ENCODE measurements at regions of chr12 and their contacts with region 1.

Region 1: GRCh38 chr12:31728917-31729640 is at the start of gene AMN1:
- DNase-seq: peak; percentile 100
- H3K4me3 Mint-ChIP-seq: peak within 1 kb of the TSS; percentile 95
- H3K27ac Mint-ChIP-seq: peak within 1 kb of the TSS; percentile 99
- H3K4me1 Mint-ChIP-seq: peaks cover 44% of the 10 kb centered on the region
- H3K27me3 Mint-ChIP-seq: no peaks in the 10 kb centered on the region
- total RNA-seq, gene AMN1: 2.3 and 2.4 TPM in 2 replicates

Region 2: GRCh38 chr12:31659087-31659933 is 69.8 kb before region 1 on chr12 and contains the start of gene ETFBKMT:
- intact Hi-C with region 1: loop called (anchors 1 kb)
- DNase-seq: peak; percentile 98
- H3K4me3 Mint-ChIP-seq: peak within 1 kb of the TSS; percentile 93
- H3K27ac Mint-ChIP-seq: peak within 1 kb of the TSS; percentile 99
- H3K4me1 Mint-ChIP-seq: peaks cover 15% of the 10 kb centered on the region
- H3K27me3 Mint-ChIP-seq: no peaks in the 10 kb centered on the region
- total RNA-seq, gene ETFBKMT: 0.52 and 0.84 TPM in 2 replicates

Region 3: DNA sequence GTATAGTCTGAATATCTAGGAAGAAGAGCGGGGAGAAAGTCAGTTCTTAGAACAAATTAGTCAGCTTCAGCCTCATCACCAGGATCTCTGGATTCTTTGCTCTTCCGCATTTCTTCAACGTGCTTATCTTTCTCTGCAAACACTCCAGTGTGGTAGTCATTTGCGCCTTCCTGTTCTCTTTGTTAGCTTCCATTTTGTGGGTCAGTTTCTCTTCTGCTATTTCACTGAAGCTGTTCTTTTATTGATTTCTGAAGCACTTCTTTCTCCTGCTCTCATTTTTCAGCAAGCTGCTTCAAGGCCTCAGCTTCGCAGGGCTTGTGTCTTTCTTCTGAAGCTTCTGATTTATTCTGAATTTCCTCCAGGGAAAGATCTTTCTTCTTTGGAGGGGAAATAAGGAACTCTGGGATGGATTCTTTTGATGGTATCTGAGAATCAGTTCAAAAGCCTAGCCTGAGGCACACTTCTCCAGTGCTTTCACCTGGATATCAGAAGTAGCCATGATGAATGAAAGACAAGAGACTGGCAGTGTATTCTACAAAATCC is 13.7 kb before region 1 on chr12:
- intact Hi-C with region 1: no loop called
- DNase-seq: no peak
- H3K4me3 Mint-ChIP-seq: no peak overlapping the region
- H3K27ac Mint-ChIP-seq: peak overlapping the region; percentile 9
- H3K4me1 Mint-ChIP-seq: peaks cover 10% of the 10 kb centered on the region
- H3K27me3 Mint-ChIP-seq: no peaks in the 10 kb centered on the region

Region 4: GRCh38 chr12:31749024-31749704 is 20.1 kb after region 1 on chr12:
- intact Hi-C with region 1: loop called (anchors 1 kb)
- DNase-seq: peak; percentile 89
- H3K4me3 Mint-ChIP-seq: peak overlapping the region; percentile 1
- H3K27ac Mint-ChIP-seq: peak overlapping the region; percentile 38
- H3K4me1 Mint-ChIP-seq: peaks cover 43% of the 10 kb centered on the region
- H3K27me3 Mint-ChIP-seq: no peaks in the 10 kb centered on the region

Region 5: DNA sequence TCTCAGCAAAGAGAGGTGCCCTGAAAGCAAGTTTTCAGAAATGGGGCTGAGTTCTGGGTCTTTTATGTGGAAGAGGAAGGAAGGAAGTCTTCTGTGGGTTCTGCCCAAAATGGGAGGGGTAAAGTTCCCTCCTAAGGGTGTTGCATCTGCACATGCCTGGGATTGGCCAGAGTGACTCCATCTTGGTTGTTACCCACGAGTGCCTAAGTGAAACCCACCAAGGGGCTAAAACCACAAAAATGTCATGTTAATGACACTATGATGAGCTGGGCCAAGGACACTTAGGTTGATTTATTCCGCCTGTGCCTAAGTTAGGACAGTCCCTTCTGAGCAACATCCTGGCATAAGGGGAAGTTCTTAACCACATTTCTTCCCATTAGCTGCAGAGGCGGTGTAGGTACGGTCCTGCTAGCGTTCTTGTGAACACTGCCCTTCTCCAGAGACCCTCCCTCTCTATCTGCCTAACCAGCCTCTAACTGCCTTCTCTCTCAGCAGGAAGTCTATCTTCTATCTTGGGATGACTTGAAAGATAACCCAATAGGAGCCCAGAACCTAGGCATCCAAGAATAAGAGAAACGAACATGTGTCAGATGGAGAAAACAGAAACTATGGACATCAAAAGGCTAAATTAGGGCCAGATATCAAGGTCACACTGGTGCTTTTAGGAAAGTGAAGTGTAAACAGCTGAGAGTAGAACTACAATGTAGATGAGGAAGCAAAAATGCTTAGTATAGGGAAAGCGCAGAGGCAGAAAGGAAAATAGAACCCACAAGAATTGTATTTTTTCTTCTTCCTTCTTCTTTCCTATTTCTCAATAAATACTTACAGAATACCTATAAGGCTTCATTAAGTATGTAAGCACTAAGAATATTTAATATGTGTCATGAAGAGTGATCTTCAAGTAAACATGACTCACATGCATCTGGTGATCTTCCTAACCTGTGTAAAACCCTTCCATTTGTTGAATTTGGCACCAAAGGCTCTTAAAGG is 104.0 kb after region 1 on chr12:
- intact Hi-C with region 1: no loop called
- DNase-seq: peak; percentile 71
- H3K4me3 Mint-ChIP-seq: peak overlapping the region; percentile 39
- H3K27ac Mint-ChIP-seq: peak overlapping the region; percentile 58
- H3K4me1 Mint-ChIP-seq: peaks cover 20% of the 10 kb centered on the region
- H3K27me3 Mint-ChIP-seq: no peaks in the 10 kb centered on the region

Region 6: DNA sequence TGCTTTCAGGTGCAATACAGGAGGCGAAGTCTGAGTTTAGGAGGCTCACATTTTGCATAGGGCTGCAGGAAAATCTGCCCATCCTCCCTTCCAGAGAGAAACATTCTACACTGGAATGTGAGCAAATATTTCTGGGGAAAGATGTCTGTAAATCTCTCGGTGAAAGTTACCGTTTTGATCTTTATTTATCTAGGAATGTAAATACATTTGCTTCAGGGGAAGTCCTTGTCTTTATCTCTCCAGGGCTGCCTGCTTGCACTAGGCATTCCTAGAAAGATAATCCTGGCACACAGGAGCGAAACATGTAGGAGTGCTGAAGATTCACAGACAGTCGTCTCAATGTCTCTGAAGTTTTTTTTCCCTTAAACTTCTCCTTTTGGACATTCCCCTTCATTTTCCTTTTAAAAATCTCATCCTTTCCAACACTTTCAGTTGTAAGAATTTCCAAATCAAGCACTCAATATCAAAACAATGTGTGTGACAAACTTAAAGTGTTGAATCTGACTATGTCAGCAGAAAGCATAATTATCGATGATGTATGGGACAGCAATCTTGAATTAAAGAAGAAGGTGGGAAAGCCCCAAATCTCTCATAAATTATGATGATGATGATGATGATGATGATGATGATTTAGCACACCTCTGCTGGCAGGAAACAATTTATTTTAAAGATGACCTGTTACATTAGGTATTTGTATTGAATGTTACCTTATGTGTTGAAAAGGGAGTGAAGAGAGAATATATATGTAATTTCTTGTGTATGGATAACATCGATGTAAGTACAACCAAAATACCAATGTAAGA is 116.7 kb after region 1 on chr12:
- intact Hi-C with region 1: no loop called
- DNase-seq: no peak
- H3K4me3 Mint-ChIP-seq: no peak overlapping the region
- H3K27ac Mint-ChIP-seq: no peak overlapping the region
- H3K4me1 Mint-ChIP-seq: no peaks in the 10 kb centered on the region
- H3K27me3 Mint-ChIP-seq: no peaks in the 10 kb centered on the region

Region 7: DNA sequence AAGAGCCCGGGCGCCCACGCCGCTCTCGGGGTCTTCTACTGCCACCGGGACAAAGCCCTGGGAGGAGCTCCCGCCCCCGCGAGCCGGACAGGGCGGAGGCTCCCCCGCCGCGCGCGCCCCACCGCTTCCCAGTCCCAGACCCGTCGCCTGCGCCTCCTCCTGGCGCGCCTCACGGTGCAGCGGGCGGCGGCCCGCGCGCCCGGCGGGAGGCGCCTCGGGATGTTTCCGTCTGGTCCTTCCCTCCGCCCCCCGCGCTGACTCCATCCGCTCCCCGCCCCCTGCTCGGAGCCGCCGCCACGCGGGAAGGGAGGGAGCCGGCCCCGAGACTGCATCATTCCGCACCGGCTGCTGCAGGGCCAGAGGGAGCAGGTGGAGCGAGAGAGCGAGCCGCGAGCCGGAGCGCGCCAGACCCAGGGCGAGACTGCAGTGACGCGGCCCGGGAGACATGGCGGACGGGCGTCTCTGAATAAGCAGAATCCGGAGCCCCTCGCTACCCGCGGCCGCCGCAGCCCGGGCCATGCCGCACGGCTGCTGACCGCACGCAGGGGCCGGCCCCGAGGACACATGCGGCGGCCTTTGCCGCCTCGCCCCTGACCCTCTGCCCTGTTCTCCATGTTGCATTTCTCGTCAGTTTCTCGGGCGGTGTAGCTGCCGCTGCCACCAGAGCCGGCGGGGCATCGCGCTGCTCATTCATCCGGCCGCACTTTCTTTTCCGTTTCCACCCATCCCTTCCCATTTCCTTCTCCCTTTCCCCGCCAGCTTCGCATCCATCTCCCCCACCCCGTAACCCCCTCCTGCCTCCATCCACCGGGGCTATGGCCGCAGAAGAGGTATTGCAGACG is 377.7 kb after region 1 on chr12 and contains the start of gene BICD1:
- intact Hi-C with region 1: loop called (anchors 2 kb)
- DNase-seq: peak; percentile 94
- H3K4me3 Mint-ChIP-seq: peak within 1 kb of the TSS; percentile 99
- H3K27ac Mint-ChIP-seq: peak within 1 kb of the TSS; percentile 92
- H3K4me1 Mint-ChIP-seq: peaks cover 23% of the 10 kb centered on the region
- H3K27me3 Mint-ChIP-seq: peaks cover 14% of the 10 kb centered on the region
- total RNA-seq, gene BICD1: 16.0 and 18.2 TPM in 2 replicates

Region 8: DNA sequence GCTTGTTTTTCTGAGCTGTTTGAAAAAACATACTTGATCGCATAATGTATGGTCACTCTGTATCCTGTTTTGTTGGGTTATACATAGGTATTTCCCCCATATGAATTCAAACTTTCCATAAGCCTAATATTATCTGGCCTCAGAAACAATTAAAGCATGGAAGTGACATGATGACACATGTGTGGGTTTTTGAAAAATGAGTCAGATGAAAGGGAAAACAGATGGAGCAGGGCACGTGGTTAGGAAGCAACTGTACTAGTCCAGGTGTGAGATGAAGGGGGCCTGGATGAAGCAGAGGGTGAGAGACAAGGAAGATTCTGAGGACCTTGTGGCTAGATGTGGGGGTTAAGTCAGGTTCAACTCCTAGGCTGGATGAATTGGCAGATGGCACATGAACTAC is 857.3 kb after region 1 on chr12:
- intact Hi-C with region 1: loop called (anchors 10 kb)
- DNase-seq: no peak
- H3K4me3 Mint-ChIP-seq: peak overlapping the region; percentile 18
- H3K27ac Mint-ChIP-seq: peak overlapping the region; percentile 69
- H3K4me1 Mint-ChIP-seq: peaks cover 66% of the 10 kb centered on the region
- H3K27me3 Mint-ChIP-seq: no peaks in the 10 kb centered on the region

Measured in activated CD4-positive, alpha-beta T cell treated with anti-CD3 and anti-CD28 coated beads, Interleukin-2, amount 10 ng/mL, durations not matched to agents 24 days and 14 days (primary cell).